Ascending aorta (tissue), 2 donors: ENCODE measurements at regions of chr9 and their contacts with region 1.

Region 1: GRCh38 chr9:2857564-2858198 is 13.8 kb upstream of the PUM3 start:
- DNase-seq: peak in 1 of 2 donors; percentile 71
- H3K4me3 ChIP-seq: no peak overlapping the region
- H3K27ac ChIP-seq: no peak overlapping the region
- H3K4me1 ChIP-seq: no peaks in the 10 kb centered on the region
- H3K27me3 ChIP-seq: no peaks in the 10 kb centered on the region
- CTCF ChIP-seq: peak; percentile 39 to 80 (median 74)

Region 2: GRCh38 chr9:2638871-2639673 is 218.6 kb before region 1 on chr9:
- intact Hi-C with region 1: no loop called
- DNase-seq: no peak
- H3K4me3 ChIP-seq: no peak overlapping the region
- H3K27ac ChIP-seq: no peak overlapping the region
- H3K4me1 ChIP-seq: no peaks in the 10 kb centered on the region
- H3K27me3 ChIP-seq: no peaks in the 10 kb centered on the region
- CTCF ChIP-seq: no peak

Region 3: DNA sequence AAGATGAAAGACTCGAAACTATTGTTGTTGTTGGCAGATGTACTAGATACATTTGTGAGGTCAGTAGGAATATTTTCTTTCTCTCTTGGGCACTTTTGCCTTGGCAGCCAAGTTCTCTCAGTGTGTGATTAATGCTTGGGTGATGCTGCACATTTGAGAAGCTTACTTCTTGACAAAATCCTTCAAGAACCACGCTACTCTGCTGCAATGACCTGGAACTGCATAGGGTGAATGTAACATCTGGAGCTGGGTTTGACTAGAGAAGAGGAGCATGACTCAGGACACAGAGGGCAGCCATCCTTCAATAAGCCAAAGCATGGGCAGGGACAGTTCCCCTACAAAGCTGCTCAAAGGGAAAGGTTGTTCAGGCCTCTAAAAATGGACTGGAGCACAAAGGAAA is 61.7 kb after region 1 on chr9:
- intact Hi-C with region 1: no loop called
- DNase-seq: no peak
- H3K4me3 ChIP-seq: no peak overlapping the region
- H3K27ac ChIP-seq: no peak overlapping the region
- H3K4me1 ChIP-seq: no peaks in the 10 kb centered on the region
- H3K27me3 ChIP-seq: no peaks in the 10 kb centered on the region
- CTCF ChIP-seq: no peak

Region 4: GRCh38 chr9:3059781-3060468 is 202.2 kb after region 1 on chr9:
- intact Hi-C with region 1: no loop called
- DNase-seq: no peak
- H3K4me3 ChIP-seq: no peak overlapping the region
- H3K27ac ChIP-seq: no peak overlapping the region
- H3K4me1 ChIP-seq: no peaks in the 10 kb centered on the region
- H3K27me3 ChIP-seq: no peaks in the 10 kb centered on the region
- CTCF ChIP-seq: no peak

Region 5: DNA sequence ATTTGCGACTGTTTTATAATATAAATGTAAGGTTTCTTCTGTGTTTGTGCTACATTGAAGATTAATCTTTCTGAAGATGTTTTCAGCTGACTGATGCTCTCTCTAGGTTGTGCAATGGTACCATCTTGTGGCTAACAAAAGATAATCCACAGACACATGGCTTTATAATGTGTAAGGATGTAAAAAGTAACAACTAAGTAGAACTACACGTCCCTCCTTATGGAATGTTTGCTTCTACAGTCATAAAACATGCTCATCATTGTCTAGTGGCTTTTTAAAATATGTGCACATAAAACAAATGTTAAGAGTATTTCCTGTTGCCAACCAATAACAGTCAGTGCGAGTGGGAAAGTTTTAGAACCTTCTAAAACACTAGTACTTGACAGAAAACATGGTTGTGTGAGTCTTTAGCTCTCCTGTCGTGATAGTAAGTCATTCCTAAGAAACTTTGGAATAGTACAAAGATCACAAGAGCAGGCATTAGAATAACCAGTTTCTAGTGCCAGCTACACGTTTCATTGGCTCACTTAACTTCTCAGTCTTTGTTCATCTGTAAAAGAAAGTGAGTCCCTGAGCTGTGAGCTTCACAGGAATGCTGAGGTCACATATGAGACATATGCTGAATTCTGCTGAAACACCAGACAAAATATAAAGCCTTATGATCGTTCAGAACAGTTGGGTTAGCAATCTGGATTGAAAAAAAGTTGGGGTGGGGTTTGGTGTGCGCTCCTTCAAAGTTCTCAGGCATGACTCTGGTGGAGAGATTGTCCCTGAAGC is 1517.9 kb after region 1 on chr9:
- intact Hi-C with region 1: loop called (anchors 5 kb)
- DNase-seq: no peak
- H3K4me3 ChIP-seq: no peak overlapping the region
- H3K27ac ChIP-seq: no peak overlapping the region
- H3K4me1 ChIP-seq: no peaks in the 10 kb centered on the region
- H3K27me3 ChIP-seq: no peaks in the 10 kb centered on the region
- CTCF ChIP-seq: peak; percentile 15 to 51 (median 24)